Calu3 (cell line): ENCODE measurements at regions of chr3 and their contacts with region 1.

Region 1: GRCh38 chr3:24494618-24495325 is at the start of gene THRB:
- DNase-seq: peak; percentile 83
- H3K4me3 Mint-ChIP-seq: peak within 1 kb of the TSS; percentile 97
- H3K27ac Mint-ChIP-seq: peak within 1 kb of the TSS; percentile 90
- H3K4me1 Mint-ChIP-seq: peaks cover 34% of the 10 kb centered on the region
- H3K27me3 Mint-ChIP-seq: no peaks in the 10 kb centered on the region
- CTCF ChIP-seq: peak; percentile 20
- total RNA-seq, gene THRB: 13.5 and 15.5 TPM in 2 replicates

Region 2: DNA sequence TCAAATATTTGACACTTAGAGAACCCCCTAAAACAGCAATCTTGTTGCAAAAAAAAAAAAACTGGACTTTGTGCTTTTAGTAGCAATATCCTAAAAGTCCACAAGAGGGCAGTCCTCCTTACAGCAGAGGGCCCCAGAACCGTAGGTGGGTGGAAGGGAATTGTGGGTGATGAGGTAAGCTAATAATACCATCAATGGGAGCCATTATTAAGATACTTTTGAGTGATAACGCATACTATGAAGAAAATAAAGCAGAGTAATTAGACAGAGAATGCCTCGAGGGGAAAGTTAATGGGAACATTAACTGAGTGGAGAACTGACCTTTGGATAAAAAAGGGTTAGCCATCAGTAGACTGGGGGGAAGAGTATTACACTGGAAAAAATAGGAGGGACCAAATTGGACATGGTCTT is 230.0 kb before region 1 on chr3:
- CTCF ChIA-PET with region 1: interaction called, 9 read pairs
- intact Hi-C with region 1: loop called (anchors 1 kb)
- DNase-seq: peak; percentile 41
- H3K4me3 Mint-ChIP-seq: no peak overlapping the region
- H3K27ac Mint-ChIP-seq: peak overlapping the region; percentile 29
- H3K4me1 Mint-ChIP-seq: peaks cover 16% of the 10 kb centered on the region
- H3K27me3 Mint-ChIP-seq: no peaks in the 10 kb centered on the region
- CTCF ChIP-seq: peak; percentile 19

Region 3: DNA sequence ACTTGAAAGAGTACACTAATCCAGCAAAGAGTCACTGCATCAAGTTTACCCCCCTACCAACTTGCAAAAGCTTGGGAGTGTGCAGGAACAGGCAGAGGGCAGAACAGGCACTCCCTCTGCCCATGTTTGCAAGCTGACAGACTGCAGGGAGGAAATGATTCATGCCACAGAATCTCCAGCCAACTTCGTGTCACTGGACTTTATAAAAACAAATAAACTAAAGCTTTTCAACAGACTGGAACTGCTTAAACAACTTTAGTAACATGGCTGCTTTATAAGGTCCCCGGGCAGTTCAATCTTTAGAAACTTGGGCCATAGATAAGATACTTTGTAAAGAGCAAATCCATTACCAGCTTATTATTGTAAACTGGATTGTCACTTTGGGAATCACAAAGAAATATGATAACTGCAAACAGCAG is 129.6 kb before region 1 on chr3:
- CTCF ChIA-PET with region 1: interaction called, 5 read pairs
- intact Hi-C with region 1: loop called (anchors 1 kb)
- DNase-seq: peak; percentile 59
- H3K4me3 Mint-ChIP-seq: no peak overlapping the region
- H3K27ac Mint-ChIP-seq: peak overlapping the region; percentile 42
- H3K4me1 Mint-ChIP-seq: peaks cover 42% of the 10 kb centered on the region
- H3K27me3 Mint-ChIP-seq: no peaks in the 10 kb centered on the region
- CTCF ChIP-seq: no peak

Region 4: DNA sequence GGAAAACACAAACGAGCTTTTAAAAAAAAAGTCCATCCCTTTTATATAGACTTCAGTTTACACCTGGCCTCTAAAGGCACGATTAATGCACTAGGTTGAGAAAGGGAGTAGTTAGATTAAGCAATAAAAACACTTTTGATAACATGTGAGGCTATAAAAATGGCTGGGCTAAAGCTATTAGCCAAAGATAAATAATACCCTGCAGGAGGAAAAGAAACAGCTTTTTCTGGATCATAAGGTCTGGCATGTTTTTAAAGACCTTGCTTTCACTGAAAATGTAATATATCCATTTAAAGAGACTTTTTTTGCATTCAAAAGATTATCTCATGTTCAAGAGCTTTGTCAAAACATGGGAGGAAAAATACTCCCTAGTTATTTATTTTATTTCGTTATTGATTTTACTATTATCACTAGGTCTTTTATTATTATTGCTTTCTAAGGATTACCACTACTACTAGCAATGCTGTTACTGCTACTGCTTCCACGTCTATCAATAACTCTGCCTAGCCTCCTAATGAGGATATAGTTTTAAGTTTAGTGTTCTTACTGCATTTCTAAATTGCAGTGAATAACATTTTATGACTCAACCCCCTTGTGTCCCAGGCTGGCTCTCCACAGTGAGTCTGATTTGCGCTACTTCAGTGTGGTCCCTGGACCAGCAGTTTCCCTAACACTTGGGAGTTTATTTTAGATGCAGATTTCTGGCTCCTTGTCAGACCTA is 93.5 kb before region 1 on chr3:
- CTCF ChIA-PET with region 1: no interaction called
- intact Hi-C with region 1: no loop called
- DNase-seq: no peak
- H3K4me3 Mint-ChIP-seq: no peak overlapping the region
- H3K27ac Mint-ChIP-seq: no peak overlapping the region
- H3K4me1 Mint-ChIP-seq: no peaks in the 10 kb centered on the region
- H3K27me3 Mint-ChIP-seq: no peaks in the 10 kb centered on the region
- CTCF ChIP-seq: no peak

Region 5: GRCh38 chr3:24582431-24583403 is 87.9 kb after region 1 on chr3:
- CTCF ChIA-PET with region 1: no interaction called
- intact Hi-C with region 1: loop called (anchors 2 kb)
- DNase-seq: peak; percentile 21
- H3K4me3 Mint-ChIP-seq: no peak overlapping the region
- H3K27ac Mint-ChIP-seq: no peak overlapping the region
- H3K4me1 Mint-ChIP-seq: no peaks in the 10 kb centered on the region
- H3K27me3 Mint-ChIP-seq: no peaks in the 10 kb centered on the region
- CTCF ChIP-seq: peak; percentile 17

Region 6: DNA sequence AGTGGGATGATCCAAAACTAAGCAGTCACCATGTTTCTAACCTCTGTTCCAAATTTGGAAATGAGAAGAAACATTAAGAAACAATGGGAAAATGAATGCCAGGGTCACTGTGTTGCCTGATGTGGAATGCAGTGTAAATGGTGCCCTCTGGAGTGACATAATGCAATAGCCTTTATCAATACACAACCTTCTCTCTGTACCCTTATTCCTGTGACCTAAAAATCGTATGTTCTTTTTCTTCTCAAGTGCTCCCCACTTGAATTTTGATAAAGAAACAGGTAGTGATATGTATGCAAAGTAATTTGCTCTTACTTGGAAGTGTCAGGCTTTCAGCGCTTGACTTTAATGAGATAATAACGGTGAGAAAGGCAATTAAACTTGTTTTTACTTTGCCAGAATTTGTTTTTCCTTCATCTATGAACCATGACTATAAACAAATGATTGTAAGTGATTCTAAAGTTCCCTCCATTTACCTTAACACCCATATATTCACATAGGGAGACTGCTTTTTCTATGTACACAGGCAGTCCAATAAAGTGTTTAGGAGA is 145.6 kb after region 1 on chr3:
- CTCF ChIA-PET with region 1: interaction called, 4 read pairs
- intact Hi-C with region 1: loop called (anchors 1 kb)
- DNase-seq: peak; percentile 32
- H3K4me3 Mint-ChIP-seq: no peak overlapping the region
- H3K27ac Mint-ChIP-seq: no peak overlapping the region
- H3K4me1 Mint-ChIP-seq: peaks cover 20% of the 10 kb centered on the region
- H3K27me3 Mint-ChIP-seq: no peaks in the 10 kb centered on the region
- CTCF ChIP-seq: peak; percentile 59